ENCODE measurements at regions of chr4 and their contacts with region 1.

Region 1: GRCh38 chr4:146495277-146495676 is 26.5 kb downstream of the SLC10A7 start:
- DNase-seq: no peak
- H3K4me3 Mint-ChIP-seq: no peak overlapping the region
- H3K27ac Mint-ChIP-seq: peak overlapping the region; percentile 52
- H3K4me1 Mint-ChIP-seq: peaks cover 26% of the 10 kb centered on the region
- H3K27me3 Mint-ChIP-seq: no peaks in the 10 kb centered on the region

Region 2: DNA sequence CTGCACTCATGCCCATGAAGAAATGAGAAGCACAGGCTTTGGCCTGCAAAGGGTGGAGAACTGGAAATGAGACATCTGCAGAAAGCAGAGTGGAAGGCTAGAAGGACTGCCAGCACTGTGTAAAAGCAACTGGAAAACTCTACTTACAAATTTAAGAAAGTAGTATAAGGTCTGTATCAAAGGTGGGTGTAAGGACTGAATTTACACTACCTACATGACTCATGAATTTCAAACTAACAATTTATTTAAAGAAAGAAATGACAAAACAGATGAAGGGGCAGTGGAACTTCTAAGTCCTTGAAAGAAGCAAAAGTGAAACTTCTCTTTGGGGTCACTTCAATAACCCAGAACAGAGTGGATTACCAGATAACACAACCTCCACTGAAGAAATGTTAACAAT is 44.8 kb before region 1 on chr4:
- intact Hi-C with region 1: loop called (anchors 1 kb)
- DNase-seq: no peak
- H3K4me3 Mint-ChIP-seq: peak overlapping the region; percentile 32
- H3K27ac Mint-ChIP-seq: peak overlapping the region; percentile 84
- H3K4me1 Mint-ChIP-seq: peaks cover 33% of the 10 kb centered on the region
- H3K27me3 Mint-ChIP-seq: no peaks in the 10 kb centered on the region

Region 3: GRCh38 chr4:146458594-146458993 is 36.7 kb before region 1 on chr4:
- intact Hi-C with region 1: loop called (anchors 1 kb)
- DNase-seq: no peak
- H3K4me3 Mint-ChIP-seq: peak overlapping the region; percentile 65
- H3K27ac Mint-ChIP-seq: peak overlapping the region; percentile 86
- H3K4me1 Mint-ChIP-seq: peaks cover 29% of the 10 kb centered on the region
- H3K27me3 Mint-ChIP-seq: no peaks in the 10 kb centered on the region

Region 4: GRCh38 chr4:146510942-146511341 is 15.7 kb after region 1 on chr4:
- intact Hi-C with region 1: loop called (anchors 1 kb)
- DNase-seq: no peak
- H3K4me3 Mint-ChIP-seq: no peak overlapping the region
- H3K27ac Mint-ChIP-seq: no peak overlapping the region
- H3K4me1 Mint-ChIP-seq: peaks cover 21% of the 10 kb centered on the region
- H3K27me3 Mint-ChIP-seq: no peaks in the 10 kb centered on the region